ENCODE measurements at regions of chr11 and their contacts with region 1.

Region 1: DNA sequence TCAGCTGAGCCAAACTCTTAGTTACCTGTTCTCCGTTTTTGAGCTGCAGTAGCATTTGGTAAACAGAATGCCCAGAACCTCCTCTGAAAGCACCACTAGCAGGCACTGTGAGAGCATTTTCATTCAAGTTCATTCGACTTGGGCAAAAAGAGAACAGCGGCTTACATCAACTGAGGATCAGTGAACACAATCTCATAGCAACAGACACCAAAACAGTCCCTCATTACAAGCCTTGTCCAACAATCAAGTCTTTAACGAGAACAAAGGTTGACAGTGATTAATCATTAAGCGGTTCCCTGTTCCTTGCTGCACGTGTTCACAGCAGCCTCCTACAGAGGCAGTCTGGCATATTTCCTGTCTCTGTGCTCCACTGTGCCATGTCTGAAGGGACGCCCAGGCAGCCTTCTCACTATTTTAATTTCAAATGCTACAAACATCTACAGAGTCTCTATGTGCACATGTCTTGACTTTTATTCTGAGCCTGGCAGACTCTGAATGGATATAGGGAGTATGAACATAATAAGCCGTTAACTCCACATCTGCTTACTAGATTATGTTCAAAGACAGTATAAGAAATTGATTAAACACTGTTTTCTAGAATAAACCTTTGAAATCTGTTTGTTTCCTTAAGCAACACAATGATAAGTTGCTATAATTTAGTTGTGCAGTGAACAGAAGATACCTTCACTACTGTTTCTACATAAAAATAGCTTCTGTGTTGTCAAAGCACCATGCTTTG is 88.3 kb upstream of the MTMR2 start:
- DNase-seq: peak; percentile 66
- ATAC-seq: peak; percentile 71
- H3K4me3 Mint-ChIP-seq: peak overlapping the region; percentile 53
- H3K27ac Mint-ChIP-seq: peak overlapping the region; percentile 85
- H3K4me1 Mint-ChIP-seq: peaks cover 63% of the 10 kb centered on the region
- H3K27me3 Mint-ChIP-seq: no peaks in the 10 kb centered on the region

Region 2: GRCh38 chr11:96054870-96055705 is 42.8 kb after region 1 on chr11:
- CTCF ChIA-PET with region 1: interaction called, 18 read pairs
- POLR2A ChIA-PET with region 1: no interaction called
- intact Hi-C with region 1: loop called in 1 of 2 experiments (anchors 1 kb)
- DNase-seq: no peak
- ATAC-seq: peak; percentile 20
- H3K4me3 Mint-ChIP-seq: no peak overlapping the region
- H3K27ac Mint-ChIP-seq: peak overlapping the region; percentile 88
- H3K4me1 Mint-ChIP-seq: peaks cover 86% of the 10 kb centered on the region
- H3K27me3 Mint-ChIP-seq: no peaks in the 10 kb centered on the region

Region 3: DNA sequence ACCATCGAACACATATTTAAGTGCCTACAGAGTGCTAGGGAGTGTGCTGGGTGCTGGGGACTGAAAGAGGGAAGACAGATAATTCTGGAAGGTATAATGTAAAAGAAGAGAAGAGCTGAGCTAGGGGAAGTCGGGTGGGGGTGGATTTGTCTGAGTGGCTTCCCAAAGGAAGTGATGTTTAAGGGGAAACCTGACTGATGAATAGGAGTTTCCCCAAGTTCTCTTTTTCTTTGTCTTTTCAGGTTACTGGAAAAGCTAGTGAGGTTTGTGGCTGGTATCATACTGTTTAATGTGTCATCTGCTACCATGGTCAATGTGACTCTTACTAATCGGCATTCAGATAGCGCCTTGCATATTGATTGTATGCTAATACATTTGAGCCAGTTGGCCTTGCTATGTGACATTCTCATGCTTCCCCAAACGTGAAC is 63.3 kb after region 1 on chr11:
- CTCF ChIA-PET with region 1: no interaction called
- POLR2A ChIA-PET with region 1: no interaction called
- intact Hi-C with region 1: loop called in 1 of 2 experiments (anchors 5 kb)
- DNase-seq: peak; percentile 48
- ATAC-seq: peak; percentile 86
- H3K4me3 Mint-ChIP-seq: peak overlapping the region; percentile 20
- H3K27ac Mint-ChIP-seq: peak overlapping the region; percentile 90
- H3K4me1 Mint-ChIP-seq: peaks cover 89% of the 10 kb centered on the region
- H3K27me3 Mint-ChIP-seq: no peaks in the 10 kb centered on the region

Region 4: GRCh38 chr11:96168623-96169022 is 156.4 kb after region 1 on chr11:
- CTCF ChIA-PET with region 1: no interaction called
- POLR2A ChIA-PET with region 1: no interaction called
- intact Hi-C with region 1: no loop called
- DNase-seq: peak; percentile 51
- ATAC-seq: peak; percentile 88
- H3K4me3 Mint-ChIP-seq: no peak overlapping the region
- H3K27ac Mint-ChIP-seq: peak overlapping the region; percentile 79
- H3K4me1 Mint-ChIP-seq: peaks cover 77% of the 10 kb centered on the region
- H3K27me3 Mint-ChIP-seq: no peaks in the 10 kb centered on the region

Region 5: GRCh38 chr11:96188243-96189006 is 176.2 kb after region 1 on chr11:
- CTCF ChIA-PET with region 1: interaction called, 4 read pairs
- POLR2A ChIA-PET with region 1: no interaction called
- intact Hi-C with region 1: loop called (anchors 2 to 5 kb)
- DNase-seq: peak; percentile 53
- ATAC-seq: peak; percentile 43
- H3K4me3 Mint-ChIP-seq: peak overlapping the region; percentile 53
- H3K27ac Mint-ChIP-seq: peak overlapping the region; percentile 91
- H3K4me1 Mint-ChIP-seq: peaks cover 90% of the 10 kb centered on the region
- H3K27me3 Mint-ChIP-seq: no peaks in the 10 kb centered on the region

Region 6: DNA sequence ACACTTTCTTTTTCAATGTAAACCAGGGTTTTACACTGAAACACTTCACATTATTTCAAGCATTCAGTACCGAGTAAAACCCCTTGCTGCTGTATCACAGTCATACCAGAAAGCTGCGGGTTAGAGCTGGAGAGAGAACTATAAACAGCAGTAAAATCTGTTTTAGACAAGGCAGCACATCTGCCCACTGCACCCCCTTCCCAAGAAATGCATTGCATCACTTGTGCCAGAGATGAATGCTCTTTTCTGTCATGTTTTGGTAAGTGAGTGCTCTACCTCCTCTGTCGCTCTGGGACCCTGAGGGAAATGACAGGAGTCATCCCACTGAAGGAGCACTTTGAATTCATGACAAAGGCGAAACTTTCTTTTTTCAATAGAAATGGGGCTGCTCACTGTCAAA is 223.5 kb after region 1 on chr11:
- CTCF ChIA-PET with region 1: interaction called, 3 read pairs
- POLR2A ChIA-PET with region 1: no interaction called
- intact Hi-C with region 1: loop called in 1 of 2 experiments (anchors 5 kb)
- DNase-seq: peak; percentile 86
- ATAC-seq: peak; percentile 98
- H3K4me3 Mint-ChIP-seq: peak overlapping the region; percentile 45
- H3K27ac Mint-ChIP-seq: peak overlapping the region; percentile 78
- H3K4me1 Mint-ChIP-seq: peaks cover 53% of the 10 kb centered on the region
- H3K27me3 Mint-ChIP-seq: no peaks in the 10 kb centered on the region

Region 7: GRCh38 chr11:96254087-96254486 is 241.8 kb after region 1 on chr11:
- CTCF ChIA-PET with region 1: no interaction called
- POLR2A ChIA-PET with region 1: no interaction called
- intact Hi-C with region 1: loop called in 1 of 2 experiments (anchors 5 kb)
- DNase-seq: peak; percentile 42
- ATAC-seq: peak; percentile 37
- H3K4me3 Mint-ChIP-seq: peak overlapping the region; percentile 53
- H3K27ac Mint-ChIP-seq: peak overlapping the region; percentile 88
- H3K4me1 Mint-ChIP-seq: peaks cover 89% of the 10 kb centered on the region
- H3K27me3 Mint-ChIP-seq: no peaks in the 10 kb centered on the region

Measured in activated CD4-positive, alpha-beta T cell treated with anti-CD3 and anti-CD28 coated beads for 36 hours (primary cell).